ENCODE measurements at regions of chr9 and their contacts with region 1.

Region 1: DNA sequence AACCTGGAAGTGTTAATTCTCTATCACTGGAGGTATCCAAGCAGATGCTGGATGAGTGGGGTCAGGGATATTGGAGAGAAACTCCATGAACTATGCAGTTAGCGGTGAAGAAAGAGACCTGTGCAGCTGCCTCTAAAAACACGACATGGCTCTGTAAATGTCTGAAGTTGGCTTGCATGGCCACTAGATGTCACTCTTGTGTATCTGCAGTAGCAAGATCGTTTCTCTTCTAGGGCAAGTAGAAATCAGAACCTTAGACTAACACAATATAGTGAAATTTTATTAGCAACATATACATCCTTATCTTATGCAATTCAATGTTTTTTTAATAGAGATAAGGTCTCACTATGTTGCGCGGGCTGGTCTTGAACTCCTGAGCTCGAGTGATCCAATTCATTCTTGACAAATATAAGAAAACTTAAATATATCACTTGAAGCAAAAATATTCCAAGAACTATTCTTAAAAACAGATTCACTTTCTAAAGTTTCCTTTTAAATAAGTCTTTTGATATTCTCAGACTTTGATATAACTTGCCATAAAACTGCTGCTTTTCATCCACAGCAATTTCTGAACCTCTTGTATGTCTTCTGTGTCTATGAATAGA is 2.9 kb downstream of the OR2S2 start:
- DNase-seq: peak; percentile 63
- H3K4me3 ChIP-seq: no peak overlapping the region
- H3K27ac ChIP-seq: no peak overlapping the region
- H3K4me1 ChIP-seq: no peaks in the 10 kb centered on the region
- H3K27me3 ChIP-seq: no peaks in the 10 kb centered on the region
- CTCF ChIP-seq: peak; percentile 84 to 94

Region 2: GRCh38 chr9:35603987-35604577 is 351.0 kb before region 1 on chr9:
- CTCF ChIA-PET with region 1: no interaction called
- dilution Hi-C with region 1: no loop called
- in situ Hi-C with region 1: no loop called
- intact Hi-C with region 1: no loop called
- DNase-seq: peak; percentile 99
- H3K4me3 ChIP-seq: peak overlapping the region; percentile 60 to 67 (median 64)
- H3K27ac ChIP-seq: peak overlapping the region; percentile 68
- H3K4me1 ChIP-seq: peaks cover 28% of the 10 kb centered on the region
- H3K27me3 ChIP-seq: no peaks in the 10 kb centered on the region
- CTCF ChIP-seq: peak; percentile 82 to 83

Region 3: DNA sequence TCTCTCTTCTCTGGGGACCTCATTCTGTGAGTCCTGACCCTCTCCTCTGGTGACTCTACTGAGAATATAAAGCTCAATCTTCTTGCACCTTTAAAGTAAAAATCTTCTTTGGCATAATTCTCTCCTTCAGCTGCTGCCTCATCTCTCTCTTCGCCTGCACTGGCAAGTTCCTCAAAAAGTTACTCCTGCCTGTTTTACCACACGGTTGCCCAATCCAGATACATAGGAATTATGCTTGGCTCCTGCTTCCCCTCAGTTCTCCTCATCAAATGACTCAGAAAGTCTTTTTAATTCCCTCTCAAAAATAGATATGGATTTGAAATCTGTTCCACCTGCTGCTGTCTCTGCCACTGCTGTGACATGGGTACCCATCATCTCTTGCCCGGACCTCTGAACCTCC is 63.4 kb before region 1 on chr9:
- CTCF ChIA-PET with region 1: no interaction called
- dilution Hi-C with region 1: no loop called
- in situ Hi-C with region 1: no loop called
- intact Hi-C with region 1: no loop called
- DNase-seq: no peak
- H3K4me3 ChIP-seq: no peak overlapping the region
- H3K27ac ChIP-seq: no peak overlapping the region
- H3K4me1 ChIP-seq: no peaks in the 10 kb centered on the region
- H3K27me3 ChIP-seq: no peaks in the 10 kb centered on the region
- CTCF ChIP-seq: no peak

Region 4: GRCh38 chr9:36102742-36103495 is 147.9 kb after region 1 on chr9:
- CTCF ChIA-PET with region 1: no interaction called
- dilution Hi-C with region 1: no loop called
- in situ Hi-C with region 1: no loop called
- intact Hi-C with region 1: loop called (anchors 5 kb)
- DNase-seq: peak; percentile 66
- H3K4me3 ChIP-seq: no peak overlapping the region
- H3K27ac ChIP-seq: no peak overlapping the region
- H3K4me1 ChIP-seq: peaks cover 10% of the 10 kb centered on the region
- H3K27me3 ChIP-seq: no peaks in the 10 kb centered on the region
- CTCF ChIP-seq: peak; percentile 82

Region 5: DNA sequence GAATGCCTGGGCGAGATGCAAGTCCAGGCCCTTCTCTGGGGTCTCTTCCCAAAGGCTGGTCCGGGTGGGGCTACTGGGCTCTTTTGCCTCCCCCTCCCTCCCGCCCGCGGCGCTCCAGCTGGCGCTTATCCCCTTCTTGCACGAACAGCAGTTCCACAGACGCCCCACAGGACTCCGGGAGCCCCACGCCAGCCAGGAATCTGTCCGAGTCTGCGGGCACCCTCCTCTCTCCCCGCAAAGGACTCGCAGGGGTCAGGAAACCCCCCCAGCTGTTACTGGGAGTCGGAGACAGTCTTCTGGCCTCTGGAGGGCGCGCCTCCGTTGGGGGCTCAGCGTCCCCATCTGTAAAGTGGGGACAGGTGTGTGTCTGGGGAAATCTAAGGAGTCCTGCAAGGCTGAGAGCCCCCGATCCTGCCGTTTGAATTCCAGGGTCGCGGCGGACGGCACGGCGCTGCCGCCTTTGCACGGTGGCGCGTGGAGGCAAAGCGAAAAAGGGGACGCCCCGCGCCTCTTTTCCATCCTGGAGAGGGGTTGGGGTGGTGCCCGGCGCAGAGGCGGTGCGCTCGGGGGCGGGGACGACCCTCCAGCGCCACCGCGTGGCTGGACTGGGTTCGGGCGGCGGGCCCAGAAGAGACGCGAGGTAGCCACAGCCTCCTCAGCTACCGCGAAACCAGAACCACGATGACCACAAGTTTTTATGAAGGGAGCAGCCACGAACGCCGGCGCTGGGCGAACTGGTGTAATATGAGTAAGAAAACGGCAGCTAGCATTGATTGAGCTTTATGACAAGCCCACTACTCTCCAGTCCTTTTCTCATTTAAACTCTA is 211.3 kb after region 1 on chr9:
- CTCF ChIA-PET with region 1: no interaction called
- dilution Hi-C with region 1: no loop called
- in situ Hi-C with region 1: no loop called
- intact Hi-C with region 1: loop called (anchors 1 kb)
- DNase-seq: peak; percentile 71
- H3K4me3 ChIP-seq: peak overlapping the region; percentile 18 to 38 (median 25)
- H3K27ac ChIP-seq: no peak overlapping the region
- H3K4me1 ChIP-seq: peaks cover 5% of the 10 kb centered on the region
- H3K27me3 ChIP-seq: no peaks in the 10 kb centered on the region
- CTCF ChIP-seq: peak; percentile 58 to 88

Region 6: DNA sequence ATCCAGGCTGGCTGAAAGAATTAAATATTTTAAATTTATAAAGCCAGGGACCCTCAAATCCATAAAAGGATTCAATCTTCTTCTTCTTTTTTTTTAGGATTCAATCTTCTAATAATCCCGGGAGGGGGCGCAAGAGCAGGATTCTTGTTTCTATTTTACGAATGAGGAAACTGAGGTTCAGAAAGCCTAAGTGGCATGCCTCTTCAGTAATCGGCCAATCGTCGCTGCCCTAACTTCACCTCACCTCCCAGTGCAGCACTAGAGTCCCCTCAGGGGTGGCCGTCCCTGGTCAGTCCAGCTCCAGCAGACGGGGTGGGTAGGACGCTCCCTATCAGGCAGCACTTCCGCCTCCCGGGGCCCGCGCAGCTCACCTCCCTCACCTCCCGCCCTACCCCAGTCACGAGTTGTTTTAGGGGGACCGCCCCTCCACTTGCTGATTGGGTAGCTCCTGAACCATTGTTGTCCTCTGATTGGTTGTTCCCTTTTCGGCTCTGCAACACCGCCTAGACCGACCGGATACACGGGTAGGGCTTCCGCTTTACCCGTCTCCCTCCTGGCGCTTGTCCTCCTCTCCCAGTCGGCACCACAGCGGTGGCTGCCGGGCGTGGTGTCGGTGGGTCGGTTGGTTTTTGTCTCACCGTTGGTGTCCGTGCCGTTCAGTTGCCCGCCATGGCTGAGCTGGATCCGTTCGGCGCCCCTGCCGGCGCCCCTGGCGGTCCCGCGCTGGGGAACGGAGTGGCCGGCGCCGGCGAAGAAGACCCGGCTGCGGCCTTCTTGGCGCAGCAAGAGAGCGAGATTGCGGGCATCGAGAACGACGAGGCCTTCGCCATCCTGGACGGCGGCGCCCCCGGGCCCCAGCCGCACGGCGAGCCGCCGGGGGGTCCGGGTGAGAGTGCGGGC is 235.6 kb after region 1 on chr9 and contains the start of gene CLTA:
- CTCF ChIA-PET with region 1: interaction called, 3 read pairs
- dilution Hi-C with region 1: no loop called
- in situ Hi-C with region 1: no loop called
- intact Hi-C with region 1: loop called (anchors 1 kb)
- DNase-seq: peak; percentile 99
- H3K4me3 ChIP-seq: peak within 1 kb of the TSS; percentile 65 to 97 (median 72)
- H3K27ac ChIP-seq: peak within 1 kb of the TSS; percentile 89
- H3K4me1 ChIP-seq: peaks cover 34% of the 10 kb centered on the region
- H3K27me3 ChIP-seq: no peaks in the 10 kb centered on the region
- CTCF ChIP-seq: peak; percentile 43 to 62
- total RNA-seq, gene CLTA: 130 to 217 TPM

Region 7: DNA sequence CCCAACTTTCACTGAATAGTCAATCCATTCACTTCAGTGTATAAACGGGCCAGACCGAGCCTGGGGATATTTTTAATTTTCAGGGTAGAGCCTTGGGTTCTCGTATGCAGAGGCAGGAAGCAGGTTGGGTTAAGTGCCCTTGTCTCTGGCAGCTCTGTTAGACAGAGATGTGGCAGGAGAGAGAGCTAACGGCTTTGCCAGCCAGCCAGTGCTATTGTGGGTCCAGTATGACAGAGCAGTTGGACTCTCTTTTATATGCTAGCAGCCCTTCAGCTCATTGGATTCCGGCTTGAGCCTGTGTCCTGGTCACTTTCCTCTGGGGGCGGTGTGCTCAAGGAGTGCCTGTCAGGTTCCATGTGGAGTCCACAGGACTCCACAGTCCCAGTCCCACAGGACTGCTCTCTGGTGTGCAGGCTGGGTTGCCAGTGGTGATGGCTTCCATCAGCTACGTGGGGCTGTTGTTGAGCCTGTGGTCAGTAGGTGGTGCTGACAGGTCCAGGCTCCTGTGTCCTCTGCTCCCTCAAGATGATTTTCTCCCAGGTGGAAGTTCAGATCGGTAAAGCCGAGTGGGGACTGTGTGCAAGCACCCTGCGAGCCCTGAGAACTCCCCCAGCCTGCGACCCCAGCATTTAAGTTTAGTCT is 250.0 kb after region 1 on chr9:
- CTCF ChIA-PET with region 1: interaction called, 11 read pairs
- dilution Hi-C with region 1: no loop called
- in situ Hi-C with region 1: no loop called
- intact Hi-C with region 1: no loop called
- DNase-seq: no peak
- H3K4me3 ChIP-seq: no peak overlapping the region
- H3K27ac ChIP-seq: no peak overlapping the region
- H3K4me1 ChIP-seq: peaks cover 16% of the 10 kb centered on the region
- H3K27me3 ChIP-seq: no peaks in the 10 kb centered on the region
- CTCF ChIP-seq: peak in 1 of 2 donors; percentile 24

Region 8: DNA sequence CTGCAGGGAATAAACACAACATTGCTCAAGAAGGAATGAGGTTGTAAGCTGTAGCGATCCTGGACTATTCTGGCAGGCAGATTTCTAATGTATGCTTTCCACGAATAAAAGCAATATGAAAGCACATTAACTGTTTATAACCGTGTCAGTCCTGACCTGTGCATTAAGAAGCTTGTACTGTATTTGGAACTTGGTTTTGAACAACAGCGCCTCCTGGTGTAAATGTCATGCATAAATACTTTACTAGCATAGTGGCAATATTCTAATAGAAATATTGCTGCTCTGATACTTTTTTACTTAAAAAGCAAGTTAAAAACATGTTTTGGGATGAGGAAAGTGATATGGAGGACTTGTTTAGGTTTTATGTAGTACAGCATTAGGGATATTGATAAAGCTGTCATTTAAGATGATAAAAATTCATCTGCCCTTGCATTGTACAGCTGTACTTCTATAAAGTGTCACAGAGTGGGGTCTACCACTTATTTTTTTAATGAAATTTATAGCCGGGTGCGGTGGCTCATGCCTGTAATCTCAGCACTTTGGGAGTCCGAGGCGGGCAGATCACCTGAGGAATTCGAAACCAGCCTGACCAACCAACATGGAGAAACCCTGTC is 373.9 kb after region 1 on chr9:
- CTCF ChIA-PET with region 1: no interaction called
- dilution Hi-C with region 1: no loop called
- in situ Hi-C with region 1: no loop called
- intact Hi-C with region 1: loop called (anchors 5 kb)
- DNase-seq: peak; percentile 58
- H3K4me3 ChIP-seq: no peak overlapping the region
- H3K27ac ChIP-seq: no peak overlapping the region
- H3K4me1 ChIP-seq: peaks cover 13% of the 10 kb centered on the region
- H3K27me3 ChIP-seq: no peaks in the 10 kb centered on the region
- CTCF ChIP-seq: peak; percentile 78 to 83

Measured in mammary epithelial cell (primary cell).